Activated CD4-positive, alpha-beta T cell treated with anti-CD3 and anti-CD28 coated beads for 36 hours (primary cell): ENCODE measurements at regions of chr6 and their contacts with region 1.

Region 1: DNA sequence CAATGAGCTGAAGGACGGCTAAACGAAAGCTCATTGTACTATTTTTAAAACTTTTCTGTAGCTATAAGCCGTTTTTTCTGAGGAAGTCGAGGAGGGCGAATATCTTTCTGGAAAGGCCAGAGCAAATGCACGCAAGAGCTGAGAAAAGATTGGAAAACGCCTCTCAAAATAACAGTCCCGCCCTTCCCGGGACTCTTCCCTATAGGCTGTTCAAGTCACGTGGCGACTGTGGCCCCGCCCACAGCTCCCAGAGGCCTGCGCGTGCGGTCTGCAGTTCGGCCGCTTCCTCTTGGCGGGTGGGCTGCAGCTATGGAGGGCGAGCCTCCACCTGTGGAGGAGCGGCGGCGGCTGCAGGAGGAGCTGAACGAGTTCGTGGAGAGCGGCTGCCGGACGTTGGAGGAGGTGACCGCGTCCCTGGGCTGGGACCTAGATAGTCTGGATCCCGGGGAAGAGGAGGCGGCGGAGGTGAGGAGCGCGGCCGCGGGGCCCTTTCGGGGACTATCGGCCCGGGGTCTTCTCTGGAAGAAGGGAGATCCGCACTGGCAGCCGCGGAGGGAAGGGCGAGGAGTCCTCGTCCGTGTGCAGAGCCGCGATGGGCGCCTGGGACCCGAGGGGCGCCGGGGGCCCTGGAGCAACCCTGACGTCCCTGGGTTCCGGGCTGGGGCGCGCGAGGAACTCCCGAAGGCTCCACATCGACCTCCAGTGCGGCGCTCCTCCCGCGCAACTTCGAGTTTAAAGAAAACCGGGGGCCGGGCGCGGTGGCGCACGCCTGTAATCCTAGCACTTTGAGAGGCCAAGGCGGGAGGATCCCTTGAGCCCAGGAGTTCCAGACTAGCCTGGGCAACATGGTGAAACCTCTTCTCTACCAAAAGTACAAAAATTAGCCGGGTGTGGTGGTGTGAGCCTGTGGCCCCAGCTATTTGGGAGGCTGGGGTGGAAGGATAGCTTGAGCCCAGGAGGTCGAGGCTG is at the start of gene SNRNP48:
- DNase-seq: peak; percentile 94
- ATAC-seq: peak; percentile 100
- H3K4me3 Mint-ChIP-seq: peak within 1 kb of the TSS; percentile 96
- H3K27ac Mint-ChIP-seq: peak within 1 kb of the TSS; percentile 93
- H3K4me1 Mint-ChIP-seq: peaks cover 39% of the 10 kb centered on the region
- H3K27me3 Mint-ChIP-seq: no peaks in the 10 kb centered on the region
- total RNA-seq, gene SNRNP48: 19.4 to 20.9 TPM

Region 2: GRCh38 chr6:6659600-6660327 is 930.5 kb before region 1 on chr6:
- CTCF ChIA-PET with region 1: no interaction called
- POLR2A ChIA-PET with region 1: no interaction called
- intact Hi-C with region 1: loop called in 1 of 2 experiments (anchors 5 kb)
- DNase-seq: no peak
- ATAC-seq: no peak
- H3K4me3 Mint-ChIP-seq: no peak overlapping the region
- H3K27ac Mint-ChIP-seq: peak overlapping the region; percentile 95
- H3K4me1 Mint-ChIP-seq: peaks cover 72% of the 10 kb centered on the region
- H3K27me3 Mint-ChIP-seq: no peaks in the 10 kb centered on the region

Region 3: GRCh38 chr6:7312616-7313504 is 277.4 kb before region 1 on chr6 and contains the start of gene SSR1:
- CTCF ChIA-PET with region 1: no interaction called
- POLR2A ChIA-PET with region 1: no interaction called
- intact Hi-C with region 1: loop called (anchors 1 kb)
- DNase-seq: peak; percentile 97
- ATAC-seq: peak; percentile 97
- H3K4me3 Mint-ChIP-seq: peak within 1 kb of the TSS; percentile 99
- H3K27ac Mint-ChIP-seq: peak within 1 kb of the TSS; percentile 98
- H3K4me1 Mint-ChIP-seq: peaks cover 45% of the 10 kb centered on the region
- H3K27me3 Mint-ChIP-seq: no peaks in the 10 kb centered on the region
- total RNA-seq, gene SSR1: 129 to 165 TPM

Region 4: DNA sequence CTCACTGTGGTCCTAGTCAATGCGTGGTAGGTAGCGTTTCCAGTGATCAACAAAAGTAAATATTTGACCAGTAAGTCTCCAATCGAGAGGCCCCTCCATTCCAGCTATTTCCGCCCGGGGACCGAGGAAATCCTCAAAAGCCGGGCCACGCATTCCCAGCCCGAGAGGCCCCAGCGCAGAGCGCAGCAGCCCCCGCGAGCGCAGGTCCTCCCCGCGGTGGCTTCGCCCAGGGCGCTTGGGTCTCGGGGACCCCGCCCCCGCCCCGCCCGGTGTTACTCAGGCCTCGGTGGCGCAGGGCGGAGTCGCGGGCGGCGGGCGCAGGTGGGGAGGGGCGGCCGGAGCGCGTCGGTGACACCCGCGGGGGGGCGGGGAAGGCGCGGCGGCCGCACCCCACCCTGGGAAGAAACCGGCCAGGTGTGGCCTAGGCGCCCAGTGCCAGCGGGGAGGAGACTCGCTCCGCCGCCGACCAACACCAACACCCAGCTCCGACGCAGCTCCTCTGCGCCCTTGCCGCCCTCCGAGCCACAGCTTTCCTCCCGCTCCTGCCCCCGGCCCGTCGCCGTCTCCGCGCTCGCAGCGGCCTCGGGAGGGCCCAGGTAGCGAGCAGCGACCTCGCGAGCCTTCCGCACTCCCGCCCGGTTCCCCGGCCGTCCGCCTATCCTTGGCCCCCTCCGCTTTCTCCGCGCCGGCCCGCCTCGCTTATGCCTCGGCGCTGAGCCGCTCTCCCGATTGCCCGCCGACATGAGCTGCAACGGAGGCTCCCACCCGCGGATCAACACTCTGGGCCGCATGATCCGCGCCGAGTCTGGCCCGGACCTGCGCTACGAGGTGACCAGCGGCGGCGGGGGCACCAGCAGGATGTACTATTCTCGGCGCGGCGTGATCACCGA is 48.8 kb before region 1 on chr6 and contains the start of gene DSP:
- CTCF ChIA-PET with region 1: no interaction called
- POLR2A ChIA-PET with region 1: no interaction called
- intact Hi-C with region 1: loop called (anchors 1 to 5 kb)
- DNase-seq: peak; percentile 64
- ATAC-seq: peak; percentile 83
- H3K4me3 Mint-ChIP-seq: peak within 1 kb of the TSS; percentile 69
- H3K27ac Mint-ChIP-seq: no peak within 1 kb of the TSS
- H3K4me1 Mint-ChIP-seq: peaks cover 11% of the 10 kb centered on the region
- H3K27me3 Mint-ChIP-seq: peaks cover 58% of the 10 kb centered on the region
- total RNA-seq, gene DSP: 0.05 to 0.09 TPM

Region 5: DNA sequence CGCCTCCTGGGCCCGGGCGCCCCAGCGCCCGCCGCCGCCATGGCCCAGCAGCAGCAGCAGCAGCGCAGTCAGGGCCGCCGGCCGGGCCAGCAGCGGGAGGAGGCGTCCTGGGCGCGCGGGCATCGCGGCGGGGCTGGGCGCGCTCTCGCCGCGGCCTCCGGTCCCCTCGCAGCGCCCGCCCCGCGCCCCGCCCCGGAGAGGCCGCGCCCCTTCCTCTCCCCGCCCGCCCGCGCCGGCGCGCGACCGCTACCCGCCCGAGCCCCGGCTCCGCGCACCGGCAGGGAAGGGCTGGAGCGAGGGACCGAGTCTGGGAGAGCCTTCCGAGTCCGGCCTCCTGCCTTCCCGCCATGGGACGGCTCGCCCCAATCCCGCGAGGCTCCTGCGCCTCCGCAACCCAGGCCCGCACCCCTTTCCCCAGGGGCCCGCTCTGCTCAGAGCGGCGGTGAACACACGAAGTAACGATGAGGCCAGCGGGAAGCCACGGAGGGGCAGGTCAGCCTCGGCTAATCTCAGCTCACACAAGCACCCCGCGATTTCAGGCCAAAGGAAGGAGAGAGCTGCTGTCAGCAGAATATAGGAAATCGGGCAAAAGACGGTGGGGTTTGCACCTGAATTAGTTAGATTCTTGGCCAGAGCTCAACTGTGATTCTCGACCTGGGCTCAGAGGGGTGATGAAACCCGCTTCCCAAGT is 320.6 kb after region 1 on chr6 and contains the start of gene TXNDC5:
- CTCF ChIA-PET with region 1: no interaction called
- POLR2A ChIA-PET with region 1: no interaction called
- intact Hi-C with region 1: loop called in 1 of 2 experiments (anchors 5 kb)
- DNase-seq: peak; percentile 83
- ATAC-seq: peak; percentile 87
- H3K4me3 Mint-ChIP-seq: peak within 1 kb of the TSS; percentile 91
- H3K27ac Mint-ChIP-seq: peak within 1 kb of the TSS; percentile 76
- H3K4me1 Mint-ChIP-seq: peaks cover 15% of the 10 kb centered on the region
- H3K27me3 Mint-ChIP-seq: no peaks in the 10 kb centered on the region
- total RNA-seq, gene TXNDC5: 44.4 to 52.8 TPM

Region 6: GRCh38 chr6:8102122-8102958 is 512.1 kb after region 1 on chr6 and contains the start of gene EEF1E1:
- CTCF ChIA-PET with region 1: no interaction called
- POLR2A ChIA-PET with region 1: no interaction called
- intact Hi-C with region 1: loop called in 1 of 2 experiments (anchors 1 kb)
- DNase-seq: peak; percentile 99
- ATAC-seq: peak; percentile 98
- H3K4me3 Mint-ChIP-seq: peak within 1 kb of the TSS; percentile 88
- H3K27ac Mint-ChIP-seq: peak within 1 kb of the TSS; percentile 96
- H3K4me1 Mint-ChIP-seq: peaks cover 24% of the 10 kb centered on the region
- H3K27me3 Mint-ChIP-seq: peaks cover 15% of the 10 kb centered on the region
- total RNA-seq, gene EEF1E1: 73.4 to 74.6 TPM